ENCODE measurements at regions of chr9 and their contacts with region 1.

Region 1: GRCh38 chr9:117487555-117488175 is 72.8 kb upstream of the ASTN2 start:
- DNase-seq: peak; percentile 80 to 89
- H3K4me3 ChIP-seq: no peak overlapping the region
- H3K4me3 Mint-ChIP-seq: peak overlapping the region; percentile 53
- H3K27ac Mint-ChIP-seq: no peak overlapping the region
- H3K4me1 ChIP-seq: peaks cover 26% of the 10 kb centered on the region
- H3K4me1 Mint-ChIP-seq: peaks cover 21% of the 10 kb centered on the region
- H3K27me3 ChIP-seq: no peaks in the 10 kb centered on the region
- H3K27me3 Mint-ChIP-seq: peaks cover 6% of the 10 kb centered on the region
- CTCF ChIP-seq: peak; percentile 93 to 96

Region 2: DNA sequence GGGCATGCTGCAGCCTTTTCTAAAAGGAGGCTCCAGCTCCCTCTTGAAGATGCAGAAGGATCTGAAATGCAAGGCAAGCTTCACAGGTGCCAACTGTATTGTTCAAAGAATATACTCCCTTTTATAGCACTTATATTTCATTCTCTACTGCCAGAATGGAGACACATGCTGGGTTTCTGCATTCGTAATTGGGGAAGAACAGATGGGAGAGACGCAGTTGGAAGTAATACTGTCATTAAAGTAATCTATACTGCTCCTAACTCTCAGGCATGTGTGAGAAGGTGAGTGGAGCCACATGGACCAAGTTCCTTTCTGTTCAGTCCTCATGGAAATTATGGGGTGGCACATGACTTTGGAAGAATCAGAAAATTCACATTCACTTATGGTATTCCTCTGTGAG is 574.1 kb before region 1 on chr9:
- CTCF ChIA-PET with region 1: no interaction called
- POLR2A ChIA-PET with region 1: no interaction called
- intact Hi-C with region 1: no loop called
- DNase-seq: no peak
- H3K4me3 ChIP-seq: no peak overlapping the region
- H3K4me3 Mint-ChIP-seq: no peak overlapping the region
- H3K27ac Mint-ChIP-seq: no peak overlapping the region
- H3K4me1 ChIP-seq: no peaks in the 10 kb centered on the region
- H3K4me1 Mint-ChIP-seq: no peaks in the 10 kb centered on the region
- H3K27me3 ChIP-seq: no peaks in the 10 kb centered on the region
- H3K27me3 Mint-ChIP-seq: peaks cover 17% of the 10 kb centered on the region
- CTCF ChIP-seq: no peak

Region 3: GRCh38 chr9:117535434-117535833 is 47.8 kb after region 1 on chr9:
- CTCF ChIA-PET with region 1: interaction called, 19 read pairs
- POLR2A ChIA-PET with region 1: no interaction called
- intact Hi-C with region 1: loop called (anchors 1 kb)
- DNase-seq: peak in 1 of 2 experiments; percentile 12
- H3K4me3 ChIP-seq: no peak overlapping the region
- H3K4me3 Mint-ChIP-seq: no peak overlapping the region
- H3K27ac Mint-ChIP-seq: no peak overlapping the region
- H3K4me1 ChIP-seq: no peaks in the 10 kb centered on the region
- H3K4me1 Mint-ChIP-seq: no peaks in the 10 kb centered on the region
- H3K27me3 ChIP-seq: no peaks in the 10 kb centered on the region
- H3K27me3 Mint-ChIP-seq: peaks cover 5% of the 10 kb centered on the region
- CTCF ChIP-seq: peak in 1 of 2 experiments; percentile 40

Region 4: DNA sequence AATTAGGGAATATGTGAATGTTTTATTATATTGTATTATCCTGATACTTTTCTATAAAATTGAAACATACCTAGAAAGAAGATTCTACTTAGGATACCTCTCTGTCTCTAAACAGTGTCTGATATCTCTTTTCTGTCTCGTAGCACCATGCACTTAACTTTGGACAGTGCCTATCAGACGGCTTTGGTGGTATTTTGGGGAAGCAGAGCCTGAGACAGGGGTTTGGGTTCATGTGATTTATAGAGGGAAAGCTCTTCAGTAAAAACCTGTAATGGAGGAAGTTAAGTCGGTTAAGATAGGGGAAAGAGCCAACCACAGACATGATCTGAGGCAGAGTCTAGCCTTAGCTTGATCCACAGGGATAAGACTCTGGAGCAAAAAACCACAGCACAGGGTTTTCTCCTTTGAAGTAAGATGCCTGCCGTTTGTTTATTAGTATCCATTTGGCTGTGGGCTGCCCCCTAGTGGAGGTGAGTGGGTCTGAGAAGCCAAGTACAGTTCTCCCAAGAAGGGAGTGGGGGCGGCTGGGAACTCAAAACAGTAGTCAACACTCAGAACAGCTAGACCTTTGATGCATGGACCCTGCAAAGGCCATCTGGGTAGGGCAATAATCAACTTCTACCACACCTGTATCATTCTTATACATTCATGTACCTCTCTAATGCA is 68.4 kb after region 1 on chr9:
- CTCF ChIA-PET with region 1: interaction called, 16 read pairs
- POLR2A ChIA-PET with region 1: no interaction called
- intact Hi-C with region 1: loop called (anchors 1 kb)
- DNase-seq: peak; percentile 73 to 79
- H3K4me3 ChIP-seq: no peak overlapping the region
- H3K4me3 Mint-ChIP-seq: no peak overlapping the region
- H3K27ac Mint-ChIP-seq: no peak overlapping the region
- H3K4me1 ChIP-seq: no peaks in the 10 kb centered on the region
- H3K4me1 Mint-ChIP-seq: no peaks in the 10 kb centered on the region
- H3K27me3 ChIP-seq: no peaks in the 10 kb centered on the region
- H3K27me3 Mint-ChIP-seq: peaks cover 10% of the 10 kb centered on the region
- CTCF ChIP-seq: peak; percentile 72 to 77

Region 5: GRCh38 chr9:117644133-117644931 is 156.7 kb after region 1 on chr9:
- CTCF ChIA-PET with region 1: no interaction called
- POLR2A ChIA-PET with region 1: no interaction called
- intact Hi-C with region 1: loop called (anchors 1 kb)
- DNase-seq: peak; percentile 57 to 67
- H3K4me3 ChIP-seq: no peak overlapping the region
- H3K4me3 Mint-ChIP-seq: no peak overlapping the region
- H3K27ac Mint-ChIP-seq: no peak overlapping the region
- H3K4me1 ChIP-seq: no peaks in the 10 kb centered on the region
- H3K4me1 Mint-ChIP-seq: no peaks in the 10 kb centered on the region
- H3K27me3 ChIP-seq: no peaks in the 10 kb centered on the region; the same call in 1 of the 2 replicates
- H3K27me3 Mint-ChIP-seq: peaks cover 9% of the 10 kb centered on the region
- CTCF ChIP-seq: peak; percentile 91 to 93